Activated CD4-positive, alpha-beta T cell treated with anti-CD3 and anti-CD28 coated beads for 36 hours (primary cell): ENCODE measurements at regions of chr10 and their contacts with region 1.

Region 1: DNA sequence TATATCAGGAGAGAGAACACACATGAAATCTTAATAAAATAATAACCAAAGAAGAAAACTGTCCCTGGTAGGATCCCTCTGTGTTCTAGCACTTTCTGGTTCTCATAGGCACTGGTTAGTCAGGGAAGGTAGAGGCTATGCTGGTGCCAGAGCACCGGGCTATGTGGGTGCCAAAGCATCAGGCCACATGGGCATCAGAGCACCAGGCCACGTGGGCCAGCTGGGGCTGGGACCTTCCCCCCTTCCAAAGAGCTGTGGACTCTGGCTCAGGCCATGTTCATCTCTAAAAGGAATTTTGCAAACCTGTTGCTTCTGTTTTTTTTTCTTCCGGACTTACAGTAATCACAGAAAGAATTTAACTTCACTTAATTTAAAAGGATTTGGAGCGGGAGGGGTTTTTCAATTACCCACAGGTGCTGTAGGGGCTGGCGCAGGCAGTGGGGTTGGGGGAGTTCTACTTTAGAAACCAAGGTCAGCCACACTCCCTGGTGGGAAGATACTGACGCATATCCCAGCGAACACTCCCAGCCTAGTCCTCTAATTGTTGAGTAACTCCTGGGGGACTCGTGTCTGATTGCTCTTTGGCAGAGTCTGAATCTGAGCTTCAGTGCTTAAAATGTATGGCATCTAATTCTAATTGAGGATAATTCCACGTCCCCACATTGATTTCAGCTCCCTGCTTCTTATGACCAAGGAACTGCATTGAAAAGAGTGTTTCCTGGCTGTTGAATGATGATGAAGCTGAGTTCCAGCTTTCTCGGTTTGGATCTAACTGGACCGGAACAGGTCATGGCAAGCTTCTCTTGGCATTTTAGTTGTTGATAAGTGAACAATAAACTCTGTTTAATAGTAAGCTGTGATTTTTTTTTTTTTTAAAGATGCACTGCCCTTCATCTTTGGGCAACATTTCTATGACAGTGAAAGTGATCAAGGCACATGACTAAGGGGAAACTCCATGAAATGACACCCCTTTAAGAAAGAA is 110.7 kb upstream of the FZD8 start:
- DNase-seq: no peak
- ATAC-seq: no peak
- H3K4me3 Mint-ChIP-seq: no peak overlapping the region
- H3K27ac Mint-ChIP-seq: no peak overlapping the region
- H3K4me1 Mint-ChIP-seq: no peaks in the 10 kb centered on the region
- H3K27me3 Mint-ChIP-seq: no peaks in the 10 kb centered on the region

Region 2: DNA sequence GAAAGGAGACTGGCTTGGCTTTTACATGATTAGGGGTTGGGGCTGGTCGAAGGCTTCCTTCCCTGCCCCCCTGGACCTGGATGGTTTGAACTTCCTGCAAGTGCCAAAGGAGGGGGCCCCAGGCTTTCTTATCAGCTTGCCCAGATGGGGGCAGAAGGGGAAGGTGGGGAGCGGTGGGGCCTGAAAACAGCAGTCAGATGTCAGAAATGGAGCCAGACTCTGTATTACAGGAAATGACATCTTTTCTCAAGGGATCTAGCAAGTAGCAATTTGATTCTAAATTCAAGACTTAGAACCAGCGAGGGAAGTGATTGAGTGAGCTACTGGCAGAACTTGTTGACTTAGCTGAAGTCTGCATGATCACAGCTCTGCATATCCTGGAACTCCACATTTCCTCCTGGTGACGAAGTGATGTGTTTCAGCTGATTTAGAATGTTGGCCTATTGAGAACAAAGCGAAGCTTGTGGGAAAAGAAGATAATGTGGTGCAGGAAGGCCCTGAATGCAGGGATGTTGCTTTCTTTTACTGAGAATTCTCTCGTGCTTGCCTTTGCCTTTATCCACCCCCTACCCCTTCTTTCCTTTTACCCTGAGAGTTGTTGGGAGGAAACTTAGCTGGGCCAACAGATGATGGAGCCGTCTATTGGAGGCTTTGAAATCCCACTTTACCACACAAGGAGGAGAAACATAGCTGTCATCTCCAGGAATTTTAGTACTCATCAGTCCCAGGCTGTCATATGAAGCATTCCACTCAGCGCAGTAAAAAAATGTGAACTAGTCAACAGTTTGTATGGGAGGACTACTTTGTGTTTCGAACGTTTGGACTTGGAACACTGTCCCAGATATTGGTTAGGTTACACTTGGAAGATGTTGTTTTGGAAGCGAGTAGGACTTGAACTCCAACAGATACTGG is 373.3 kb before region 1 on chr10:
- CTCF ChIA-PET with region 1: no interaction called
- POLR2A ChIA-PET with region 1: no interaction called
- intact Hi-C with region 1: no loop called
- DNase-seq: peak; percentile 34
- ATAC-seq: peak; percentile 45
- H3K4me3 Mint-ChIP-seq: peak overlapping the region; percentile 28
- H3K27ac Mint-ChIP-seq: peak overlapping the region; percentile 88
- H3K4me1 Mint-ChIP-seq: peaks cover 66% of the 10 kb centered on the region
- H3K27me3 Mint-ChIP-seq: no peaks in the 10 kb centered on the region

Region 3: GRCh38 chr10:35716776-35717175 is 36.0 kb before region 1 on chr10:
- CTCF ChIA-PET with region 1: interaction called, 3 read pairs
- POLR2A ChIA-PET with region 1: no interaction called
- intact Hi-C with region 1: loop called in 1 of 2 experiments (anchors 1 kb)
- DNase-seq: no peak
- ATAC-seq: no peak
- H3K4me3 Mint-ChIP-seq: no peak overlapping the region
- H3K27ac Mint-ChIP-seq: no peak overlapping the region
- H3K4me1 Mint-ChIP-seq: no peaks in the 10 kb centered on the region
- H3K27me3 Mint-ChIP-seq: peaks cover 1% of the 10 kb centered on the region